ENCODE measurements at regions of chr4 and their contacts with region 1.

Region 1: GRCh38 chr4:51895813-51896408 is 53.0 kb downstream of the DCUN1D4 start:
- DNase-seq: peak in 1 of 2 donors; percentile 70
- ATAC-seq: peak; percentile 89 to 98 (median 94)
- H3K4me3 ChIP-seq: no peak overlapping the region
- H3K27ac ChIP-seq: peak overlapping the region in 4 of 10 donors; percentile 5 to 38 (median 30)
- H3K4me1 ChIP-seq: peaks cover 0 to 25% (median 3%) of the 10 kb centered on the region in 9 donors
- H3K27me3 ChIP-seq: no peaks in the 10 kb centered on the region
- CTCF ChIP-seq: peak; percentile 65 to 90 (median 81)

Region 2: GRCh38 chr4:52015366-52015765 is 119.5 kb after region 1 on chr4:
- intact Hi-C with region 1: loop called in 2 of 10 experiments (anchors 5 to 10 kb)
- DNase-seq: no peak
- ATAC-seq: no peak
- H3K4me3 ChIP-seq: no peak overlapping the region
- H3K27ac ChIP-seq: no peak overlapping the region
- H3K4me1 ChIP-seq: peaks cover 0 to 10% (median 0%) of the 10 kb centered on the region in 9 donors
- H3K27me3 ChIP-seq: no peaks in the 10 kb centered on the region
- CTCF ChIP-seq: peak in 3 of 9 donors; percentile 6 to 19 (median 11)

Region 3: DNA sequence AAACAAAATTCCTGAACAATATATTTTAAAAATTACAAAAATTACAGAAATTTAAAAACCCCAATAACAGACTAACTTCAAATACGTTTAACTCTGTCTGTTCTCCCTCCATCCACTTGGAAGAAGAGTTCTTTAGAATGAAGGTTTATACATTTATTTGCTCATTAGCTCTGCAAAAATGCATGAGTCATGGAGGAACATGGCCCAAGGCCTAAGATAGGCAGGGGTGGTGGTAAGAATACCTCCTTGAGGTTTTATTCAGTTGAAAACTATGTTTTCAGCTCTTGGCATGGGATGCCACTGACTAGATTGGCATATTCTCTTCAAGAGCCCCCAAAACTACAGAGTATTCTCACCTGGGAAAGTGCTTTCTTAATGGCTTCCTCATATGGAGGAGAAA is 133.1 kb after region 1 on chr4:
- intact Hi-C with region 1: loop called in 7 of 10 experiments (anchors 5 kb)
- DNase-seq: no peak
- ATAC-seq: no peak
- H3K4me3 ChIP-seq: no peak overlapping the region
- H3K27ac ChIP-seq: no peak overlapping the region
- H3K4me1 ChIP-seq: peaks cover 0 to 9% (median 0%) of the 10 kb centered on the region in 9 donors
- H3K27me3 ChIP-seq: no peaks in the 10 kb centered on the region
- CTCF ChIP-seq: no peak

Region 4: GRCh38 chr4:52038103-52038912 is 142.4 kb after region 1 on chr4 and contains the start of gene SGCB:
- intact Hi-C with region 1: loop called in 1 of 10 experiments (anchors 5 kb)
- DNase-seq: peak; percentile 69 to 82
- ATAC-seq: peak; percentile 86 to 93 (median 92)
- H3K4me3 ChIP-seq: peak within 1 kb of the TSS; percentile 70 to 98 (median 80)
- H3K27ac ChIP-seq: peak within 1 kb of the TSS; percentile 81 to 92 (median 89)
- H3K4me1 ChIP-seq: peaks cover 0 to 37% (median 20%) of the 10 kb centered on the region in 9 donors
- H3K27me3 ChIP-seq: peaks cover 0 to 37% (median 0%) of the 10 kb centered on the region in 7 donors
- CTCF ChIP-seq: no peak
- total RNA-seq, gene SGCB: 75.9 to 124 (median 91.8) TPM

Region 5: DNA sequence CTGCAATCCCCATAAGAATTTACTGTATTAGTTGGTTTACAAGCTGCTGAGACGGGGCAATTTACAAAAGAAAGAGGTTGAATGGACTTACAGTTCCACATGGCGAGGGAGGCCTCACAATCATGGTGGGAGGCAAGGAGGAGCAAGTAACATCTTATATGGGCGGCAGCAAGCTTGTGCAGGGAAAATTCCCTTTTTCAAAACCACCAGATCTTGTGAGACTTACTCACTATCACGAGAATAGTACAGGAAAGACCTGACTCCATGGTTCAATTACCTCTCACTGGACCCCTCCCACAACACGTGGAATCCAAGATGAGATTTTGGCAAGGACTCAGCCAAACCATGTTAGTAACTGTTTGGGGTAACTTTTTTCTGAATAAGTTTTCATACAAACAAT is 153.4 kb after region 1 on chr4:
- intact Hi-C with region 1: no loop called
- DNase-seq: no peak
- ATAC-seq: no peak
- H3K4me3 ChIP-seq: no peak overlapping the region
- H3K27ac ChIP-seq: no peak overlapping the region
- H3K4me1 ChIP-seq: peaks cover 0 to 19% (median 12%) of the 10 kb centered on the region in 9 donors
- H3K27me3 ChIP-seq: peaks cover 0 to 89% (median 14%) of the 10 kb centered on the region in 7 donors
- CTCF ChIP-seq: no peak